ENCODE measurements at regions of chr10 and their contacts with region 1.

Region 1: GRCh38 chr10:50152792-50153272 is 85.1 kb downstream of the WASHC2A start:
- DNase-seq: no peak
- H3K4me3 ChIP-seq: no peak overlapping the region
- H3K4me3 Mint-ChIP-seq: no peak overlapping the region
- H3K27ac Mint-ChIP-seq: no peak overlapping the region
- H3K4me1 ChIP-seq: no peaks in the 10 kb centered on the region
- H3K4me1 Mint-ChIP-seq: no peaks in the 10 kb centered on the region
- H3K27me3 ChIP-seq: no peaks in the 10 kb centered on the region
- H3K27me3 Mint-ChIP-seq: peaks cover 10% of the 10 kb centered on the region
- CTCF ChIP-seq: no peak

Region 2: GRCh38 chr10:50021646-50022045 is 131.2 kb before region 1 on chr10:
- CTCF ChIA-PET with region 1: no interaction called
- POLR2A ChIA-PET with region 1: no interaction called
- intact Hi-C with region 1: loop called (anchors 10 kb)
- DNase-seq: no peak
- H3K4me3 ChIP-seq: no peak overlapping the region
- H3K4me3 Mint-ChIP-seq: no peak overlapping the region
- H3K27ac Mint-ChIP-seq: no peak overlapping the region
- H3K4me1 ChIP-seq: no peaks in the 10 kb centered on the region
- H3K4me1 Mint-ChIP-seq: no peaks in the 10 kb centered on the region
- H3K27me3 ChIP-seq: no peaks in the 10 kb centered on the region
- H3K27me3 Mint-ChIP-seq: peaks cover 4% of the 10 kb centered on the region
- CTCF ChIP-seq: no peak

Region 3: DNA sequence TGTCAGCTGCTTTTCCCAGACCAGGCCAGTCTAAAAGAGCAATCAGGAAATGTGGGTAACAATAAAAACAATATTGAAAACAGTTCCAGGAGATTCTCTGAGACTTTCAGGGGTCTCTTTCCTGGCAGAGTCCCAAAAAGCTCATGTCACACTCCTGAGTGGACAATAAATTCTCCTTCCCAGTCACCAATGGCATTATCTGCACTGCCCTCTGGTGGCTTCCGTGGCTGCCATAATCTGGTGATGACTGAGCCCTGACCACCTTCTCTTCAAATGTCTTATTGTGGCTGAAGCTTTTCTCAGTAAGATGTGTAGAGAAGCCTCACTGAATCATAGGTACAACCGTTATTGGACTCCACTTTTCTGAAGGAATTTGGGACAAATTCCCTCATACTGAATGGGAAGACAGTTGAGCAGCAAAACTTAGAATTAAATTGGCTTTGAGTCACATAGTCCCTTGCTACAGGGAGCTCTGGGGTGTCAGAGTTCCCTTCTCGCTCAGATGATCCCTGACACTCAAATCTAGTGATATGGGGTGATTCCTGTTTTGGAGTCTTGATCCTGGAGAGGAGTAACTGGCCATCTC is 122.9 kb after region 1 on chr10:
- CTCF ChIA-PET with region 1: no interaction called
- POLR2A ChIA-PET with region 1: no interaction called
- intact Hi-C with region 1: loop called (anchors 10 kb)
- DNase-seq: peak; percentile 55 to 74
- H3K4me3 ChIP-seq: no peak overlapping the region
- H3K4me3 Mint-ChIP-seq: no peak overlapping the region
- H3K27ac Mint-ChIP-seq: no peak overlapping the region
- H3K4me1 ChIP-seq: no peaks in the 10 kb centered on the region
- H3K4me1 Mint-ChIP-seq: peaks cover 5% of the 10 kb centered on the region
- H3K27me3 ChIP-seq: peaks cover 4% of the 10 kb centered on the region; the same call in 1 of the 2 replicates
- H3K27me3 Mint-ChIP-seq: peaks cover 12% of the 10 kb centered on the region
- CTCF ChIP-seq: peak; percentile 78 to 93

Measured in Caco-2 (cell line).